ENCODE measurements at regions of chr1 and their contacts with region 1.

Region 1: DNA sequence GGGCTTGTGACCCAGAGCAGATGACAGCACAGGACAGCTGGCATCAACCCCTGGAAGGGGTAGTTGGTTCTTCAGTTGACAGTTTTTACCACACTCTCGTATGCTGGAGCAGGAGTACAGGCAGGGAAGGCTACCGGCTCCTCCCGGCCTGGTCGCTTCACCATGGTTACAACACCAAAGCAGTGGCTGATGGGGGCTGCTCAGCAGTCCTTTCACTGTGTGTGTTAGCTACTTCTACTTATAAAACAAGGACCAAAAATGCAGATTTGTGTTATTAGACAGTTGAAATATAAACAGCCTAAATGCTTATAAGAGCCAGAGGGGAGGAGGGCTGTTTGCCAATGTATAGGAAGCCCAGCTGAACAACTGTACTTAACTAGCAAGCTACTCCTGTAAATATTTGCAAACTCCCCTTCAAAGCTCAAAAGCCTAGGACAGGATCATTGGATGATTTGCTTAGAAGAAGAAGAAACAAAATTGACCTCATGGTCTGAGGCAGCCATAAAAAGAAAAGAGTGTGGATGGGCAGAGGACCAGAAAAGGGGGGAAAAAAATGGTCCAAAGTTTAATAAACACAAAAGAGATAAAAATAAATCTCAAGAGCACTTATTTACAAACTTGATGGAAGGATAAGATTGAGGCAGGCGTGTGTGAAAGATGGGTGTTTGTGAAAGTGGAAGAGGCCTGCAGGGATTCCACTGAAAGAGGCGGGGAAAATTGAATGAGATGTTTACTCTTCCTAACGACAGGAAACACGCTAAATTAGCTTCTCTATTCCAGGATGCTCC is 57.1 kb downstream of the TGFB2 start:
- DNase-seq: no peak

Region 2: GRCh38 chr1:218479436-218480115 is 77.4 kb after region 1 on chr1:
- intact Hi-C with region 1: loop called in 1 of 2 experiments (anchors 2 kb)
- DNase-seq: no peak